PC-9 (cell line): ENCODE measurements at regions of chr16 and their contacts with region 1.

Region 1: GRCh38 chr16:28491970-28492474 is at the start of gene CLN3:
- DNase-seq: peak; percentile 95
- H3K4me3 ChIP-seq: peak within 1 kb of the TSS; percentile 78
- H3K27ac ChIP-seq: peak within 1 kb of the TSS; percentile 91
- H3K4me1 ChIP-seq: peaks cover 26% of the 10 kb centered on the region
- H3K27me3 ChIP-seq: no peaks in the 10 kb centered on the region
- CTCF ChIP-seq: no peak
- total RNA-seq, gene CLN3: 59.1 and 70.3 TPM in 2 replicates

Region 2: GRCh38 chr16:28304214-28304613 is 187.8 kb before region 1 on chr16:
- CTCF ChIA-PET with region 1: interaction called, 19 read pairs
- POLR2A ChIA-PET with region 1: no interaction called
- intact Hi-C with region 1: no loop called
- DNase-seq: peak in 1 of 2 experiments; percentile 23
- H3K4me3 ChIP-seq: no peak overlapping the region
- H3K27ac ChIP-seq: no peak overlapping the region
- H3K4me1 ChIP-seq: no peaks in the 10 kb centered on the region
- H3K27me3 ChIP-seq: peaks cover 23% of the 10 kb centered on the region
- CTCF ChIP-seq: no peak

Region 3: GRCh38 chr16:28473714-28474265 is 18.2 kb before region 1 on chr16:
- CTCF ChIA-PET with region 1: no interaction called
- POLR2A ChIA-PET with region 1: interaction called, 11 read pairs
- intact Hi-C with region 1: no loop called
- DNase-seq: no peak
- H3K4me3 ChIP-seq: no peak overlapping the region
- H3K27ac ChIP-seq: no peak overlapping the region
- H3K4me1 ChIP-seq: no peaks in the 10 kb centered on the region
- H3K27me3 ChIP-seq: no peaks in the 10 kb centered on the region
- CTCF ChIP-seq: no peak

Region 4: DNA sequence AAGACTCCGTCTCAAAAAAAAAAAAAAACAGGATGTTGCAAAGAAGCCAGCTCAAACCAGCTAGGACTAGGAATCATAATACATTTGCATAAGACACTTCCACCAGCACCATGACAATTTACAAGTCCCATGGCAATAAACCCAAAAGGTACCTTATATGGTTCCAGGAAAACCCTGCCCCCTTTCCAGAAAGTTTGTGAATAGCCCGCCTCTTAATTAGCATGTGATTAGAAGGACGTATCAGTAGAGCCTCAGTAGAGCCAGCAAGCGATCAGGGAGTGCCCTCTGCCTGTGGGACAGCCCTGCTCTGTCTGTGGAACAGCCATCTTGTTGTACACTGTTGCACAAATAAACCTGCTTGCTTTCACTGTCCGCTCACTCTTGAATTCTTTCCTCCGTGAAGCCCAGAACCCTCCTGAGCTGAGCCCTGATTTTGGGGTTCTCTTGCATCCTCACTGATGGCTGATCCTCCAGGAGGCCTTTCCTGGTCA is 32.7 kb after region 1 on chr16:
- CTCF ChIA-PET with region 1: no interaction called
- POLR2A ChIA-PET with region 1: no interaction called
- intact Hi-C with region 1: loop called (anchors 5 kb)
- DNase-seq: no peak
- H3K4me3 ChIP-seq: no peak overlapping the region
- H3K27ac ChIP-seq: no peak overlapping the region
- H3K4me1 ChIP-seq: peaks cover 48% of the 10 kb centered on the region
- H3K27me3 ChIP-seq: no peaks in the 10 kb centered on the region
- CTCF ChIP-seq: no peak

Region 5: GRCh38 chr16:28561557-28562187 is 69.7 kb after region 1 on chr16:
- CTCF ChIA-PET with region 1: no interaction called
- POLR2A ChIA-PET with region 1: no interaction called
- intact Hi-C with region 1: no loop called
- DNase-seq: no peak
- H3K4me3 ChIP-seq: no peak overlapping the region
- H3K27ac ChIP-seq: no peak overlapping the region
- H3K4me1 ChIP-seq: no peaks in the 10 kb centered on the region
- H3K27me3 ChIP-seq: no peaks in the 10 kb centered on the region
- CTCF ChIP-seq: no peak

Region 6: GRCh38 chr16:29736112-29736511 is 1244.1 kb after region 1 on chr16:
- CTCF ChIA-PET with region 1: interaction called, 14 read pairs
- POLR2A ChIA-PET with region 1: no interaction called
- intact Hi-C with region 1: no loop called
- DNase-seq: no peak
- H3K4me3 ChIP-seq: no peak overlapping the region
- H3K27ac ChIP-seq: no peak overlapping the region
- H3K4me1 ChIP-seq: peaks cover 8% of the 10 kb centered on the region
- H3K27me3 ChIP-seq: no peaks in the 10 kb centered on the region
- CTCF ChIP-seq: no peak; the same call in 1 of the 2 replicates